Right lobe of liver (tissue), 6 donors: ENCODE measurements at regions of chr14 and their contacts with region 1.

Region 1: DNA sequence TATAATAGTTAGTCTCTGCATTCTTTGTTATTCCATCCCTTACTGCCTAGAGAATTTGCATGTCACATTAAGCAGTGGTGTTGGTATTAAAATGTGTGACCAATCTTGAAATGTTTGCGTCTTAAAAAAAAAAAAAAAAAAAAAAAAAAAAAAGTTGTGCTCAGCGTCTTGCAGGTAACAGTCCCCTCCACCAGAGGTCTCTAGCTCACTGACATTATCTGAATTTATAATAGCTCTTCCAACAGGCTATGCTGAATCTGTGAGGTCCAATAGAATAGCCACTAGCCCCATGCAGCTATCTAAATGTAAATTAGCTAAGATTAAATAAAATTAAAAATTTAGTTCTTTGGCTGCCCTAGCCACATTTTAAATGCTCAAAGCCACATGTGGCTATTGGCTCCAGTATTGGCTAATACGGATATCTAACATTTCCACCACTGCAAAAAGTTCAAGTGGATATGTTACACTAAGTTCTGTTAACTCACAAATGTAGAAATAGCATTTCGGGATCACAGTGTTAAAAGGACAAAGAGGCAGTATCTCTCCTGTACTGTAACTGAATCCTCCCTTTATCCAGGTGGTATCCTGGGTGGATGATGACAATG is 28.7 kb downstream of the NKX2-8 start:
- DNase-seq: no peak
- ATAC-seq: peak; percentile 79 to 88 (median 82)
- H3K4me3 ChIP-seq: no peak overlapping the region
- H3K27ac ChIP-seq: no peak overlapping the region
- H3K4me1 ChIP-seq: no peaks in the 10 kb centered on the region
- H3K27me3 ChIP-seq: no peaks in the 10 kb centered on the region
- CTCF ChIP-seq: peak; percentile 51 to 66 (median 62)
- POLR2A ChIP-seq: no peak

Region 2: DNA sequence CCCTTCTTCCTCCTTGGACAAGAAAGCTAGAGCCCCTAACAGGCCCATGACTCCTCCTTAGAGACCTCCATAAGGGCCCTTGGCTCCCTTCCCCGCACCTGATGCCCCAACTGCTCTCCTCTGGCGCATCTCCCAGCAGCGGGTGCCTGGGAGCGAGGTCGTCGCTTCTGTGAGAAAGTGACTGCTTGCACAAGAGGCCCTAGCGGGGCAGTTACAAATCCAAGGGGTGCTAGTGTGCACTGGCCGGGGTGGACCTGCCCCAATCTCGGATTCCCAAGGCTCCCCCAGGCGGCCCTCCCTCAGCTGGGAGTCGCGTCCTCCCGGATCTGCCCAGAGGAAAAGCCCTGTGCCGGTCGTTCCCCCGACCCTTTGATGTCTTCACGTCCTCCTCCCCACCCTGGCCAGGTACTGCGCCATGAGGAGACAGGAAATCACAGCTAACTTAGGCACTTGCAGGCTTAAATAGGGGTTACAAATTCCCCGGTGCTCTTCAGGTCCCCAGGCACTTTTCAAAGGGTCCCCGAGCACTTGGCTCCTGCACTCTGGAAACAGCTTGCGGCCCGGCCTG is 25.9 kb after region 1 on chr14:
- intact Hi-C with region 1: no loop called
- DNase-seq: no peak
- ATAC-seq: no peak
- H3K4me3 ChIP-seq: no peak overlapping the region
- H3K27ac ChIP-seq: no peak overlapping the region
- H3K4me1 ChIP-seq: peaks cover 0 to 10% (median 0%) of the 10 kb centered on the region in 4 donors
- H3K27me3 ChIP-seq: peaks cover 7 to 15% of the 10 kb centered on the region in 2 donors
- CTCF ChIP-seq: no peak
- POLR2A ChIP-seq: no peak

Region 3: DNA sequence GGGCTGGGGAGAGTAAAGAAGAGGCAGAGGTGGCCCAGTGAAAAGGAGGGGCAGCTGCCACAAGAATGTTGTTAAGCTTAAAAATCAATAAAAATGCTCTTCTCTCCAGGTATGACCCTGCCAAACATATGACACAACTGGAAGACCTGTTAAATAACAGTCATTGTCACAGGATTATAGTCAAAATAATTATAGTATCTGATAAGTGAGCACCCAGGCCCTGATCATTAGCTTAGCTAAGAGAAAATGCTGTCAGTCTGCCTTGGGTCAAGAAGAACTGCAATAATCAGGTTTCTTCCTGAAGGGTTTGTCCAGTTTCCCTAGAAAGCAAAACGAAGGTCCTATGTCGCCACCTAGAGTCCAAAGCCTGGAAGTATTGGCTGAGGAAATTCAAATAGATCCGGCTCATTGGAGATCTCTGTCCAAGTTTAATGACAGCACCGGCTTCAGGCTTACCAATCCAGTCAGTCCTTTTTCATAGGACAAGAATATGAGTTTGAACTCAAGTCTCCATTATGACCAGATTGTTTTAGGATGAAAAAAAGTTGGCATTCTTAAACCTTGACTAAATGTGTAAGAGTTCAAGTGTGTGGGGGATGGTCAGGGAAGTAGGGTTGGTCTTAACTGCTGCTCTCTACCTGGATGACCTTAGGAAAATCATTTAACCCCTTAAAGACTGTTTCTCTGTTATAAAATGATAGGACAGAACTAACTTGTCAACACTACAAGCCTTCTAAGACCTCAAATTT is 51.2 kb after region 1 on chr14:
- intact Hi-C with region 1: loop called in 1 of 2 experiments (anchors 10 kb)
- DNase-seq: no peak
- ATAC-seq: peak; percentile 88 to 97 (median 94)
- H3K4me3 ChIP-seq: no peak overlapping the region
- H3K27ac ChIP-seq: no peak overlapping the region
- H3K4me1 ChIP-seq: no peaks in the 10 kb centered on the region
- H3K27me3 ChIP-seq: no peaks in the 10 kb centered on the region
- CTCF ChIP-seq: peak; percentile 71 to 84 (median 78)
- POLR2A ChIP-seq: no peak

Region 4: GRCh38 chr14:36724162-36724561 is 170.4 kb after region 1 on chr14:
- intact Hi-C with region 1: no loop called
- DNase-seq: no peak
- ATAC-seq: no peak
- H3K4me3 ChIP-seq: no peak overlapping the region
- H3K27ac ChIP-seq: no peak overlapping the region
- H3K4me1 ChIP-seq: no peaks in the 10 kb centered on the region
- H3K27me3 ChIP-seq: no peaks in the 10 kb centered on the region
- CTCF ChIP-seq: no peak
- POLR2A ChIP-seq: no peak